Cardiac septum (tissue), 1 donor: ENCODE measurements at regions of chr2 and their contacts with region 1.

Region 1: DNA sequence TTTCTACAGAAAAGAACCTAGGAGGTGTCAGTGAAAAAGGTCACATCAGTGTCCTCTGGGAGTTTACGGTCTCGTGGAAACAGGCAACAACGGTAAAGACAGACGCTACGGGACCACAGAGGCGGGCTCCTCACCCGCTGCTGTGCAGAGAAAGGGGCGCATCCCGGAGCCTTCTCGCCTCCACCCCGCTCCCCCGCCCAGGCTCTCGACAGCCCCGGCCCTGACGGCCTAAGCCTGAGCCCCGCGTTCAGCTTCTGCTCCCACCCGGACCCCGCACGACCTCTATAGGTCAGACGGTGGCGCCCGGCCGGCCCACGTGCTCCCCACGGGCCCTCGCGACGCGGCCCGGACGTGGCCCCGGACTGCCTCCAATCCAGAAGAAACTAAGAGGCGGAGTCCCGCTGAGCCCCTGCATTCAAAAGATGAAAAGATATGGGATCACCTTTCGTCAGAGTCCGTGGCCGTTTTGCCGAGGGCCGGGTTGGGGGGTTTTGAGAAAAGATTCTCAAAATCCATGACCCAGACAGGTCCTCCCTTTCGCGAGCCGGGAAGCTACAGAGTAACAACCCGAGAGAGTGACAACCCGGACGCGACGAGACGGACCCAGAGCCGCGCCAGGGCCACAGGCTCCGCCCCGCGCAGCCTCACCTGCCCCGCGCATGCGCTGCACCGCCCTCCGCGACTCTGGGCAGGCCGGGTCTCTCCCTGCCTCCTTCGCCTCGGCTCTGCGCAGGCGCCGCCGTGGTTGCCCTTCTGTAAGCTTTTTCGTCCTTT is at the start of gene ZC3H8:
- DNase-seq: peak; percentile 98
- total RNA-seq, gene ZC3H8: 9.6 TPM

Region 2: GRCh38 chr2:111897924-111898702 is 356.5 kb before region 1 on chr2 and contains the start of gene MERTK:
- intact Hi-C with region 1: loop called (anchors 5 kb)
- DNase-seq: peak; percentile 94
- total RNA-seq, gene MERTK: 5.8 TPM

Region 3: DNA sequence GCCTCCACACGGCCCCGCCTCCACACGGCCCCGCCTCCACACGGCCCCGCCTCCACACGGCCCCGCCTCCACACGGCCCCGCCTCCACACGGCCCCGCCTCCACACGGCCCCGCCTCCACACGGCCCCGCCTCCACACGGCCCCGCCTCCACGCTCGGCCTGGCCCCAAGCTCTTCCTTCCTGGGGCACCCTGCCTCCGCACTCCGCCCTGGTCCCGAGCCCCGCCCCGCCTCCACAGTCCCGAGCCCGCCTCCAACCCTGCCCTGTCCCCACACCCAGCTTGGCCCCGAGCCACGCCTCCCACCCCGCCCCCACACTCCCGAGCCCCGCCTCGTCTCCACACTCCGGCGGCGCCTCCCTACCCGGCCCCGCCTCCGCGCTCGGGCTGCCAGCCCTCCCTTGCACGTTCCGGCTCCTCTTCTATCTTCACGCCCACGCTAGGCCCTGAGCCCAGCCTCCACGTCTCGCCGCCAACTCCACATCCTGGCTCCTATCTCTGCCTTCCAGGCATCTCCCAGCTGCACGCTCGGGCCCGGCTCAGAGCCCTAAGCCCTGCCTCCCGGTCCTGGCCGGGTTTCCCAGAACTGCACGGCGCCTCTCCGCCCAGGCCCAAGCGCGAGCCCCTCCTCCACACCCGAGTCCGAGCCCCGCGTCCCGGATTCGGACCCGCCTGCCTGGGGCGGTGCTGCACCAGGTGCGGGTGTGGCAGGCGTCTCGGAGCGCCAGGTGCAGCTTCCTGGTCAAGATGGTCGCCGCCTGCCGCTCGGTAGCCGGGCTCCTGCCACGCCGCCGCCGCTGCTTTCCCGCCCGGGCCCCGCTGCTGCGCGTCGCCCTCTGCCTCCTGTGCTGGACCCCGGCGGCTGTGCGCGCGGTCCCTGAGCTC is 199.6 kb before region 1 on chr2 and contains the start of gene TMEM87B:
- intact Hi-C with region 1: loop called (anchors 5 kb)
- DNase-seq: peak; percentile 99
- total RNA-seq, gene TMEM87B: 11.0 TPM

Region 4: DNA sequence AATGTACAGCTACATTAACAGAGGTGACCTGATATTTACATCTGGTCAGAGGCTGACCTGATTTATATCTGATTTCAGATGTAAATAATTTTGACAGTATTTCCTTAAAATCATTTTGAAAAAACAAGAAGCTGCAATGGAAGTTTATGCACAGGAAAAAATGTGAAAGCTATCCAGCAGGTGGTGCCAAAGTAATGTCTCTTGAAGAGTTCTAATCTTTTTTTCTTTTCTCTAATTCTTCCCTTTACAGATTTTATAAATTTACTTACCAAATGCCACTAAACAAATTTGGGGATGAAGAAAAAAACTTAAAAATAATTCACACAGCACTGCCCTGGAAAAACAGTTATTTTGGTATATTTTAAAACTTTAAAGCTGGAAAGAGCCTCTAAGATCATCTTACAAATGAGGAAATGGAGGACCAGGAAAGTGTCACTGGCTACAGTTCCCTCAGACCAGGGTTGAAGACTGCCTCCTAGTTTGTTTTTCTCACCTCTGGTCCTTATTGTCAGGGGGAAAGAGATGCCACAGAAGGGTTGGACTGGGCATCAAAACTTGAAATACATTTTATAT is 132.9 kb before region 1 on chr2:
- intact Hi-C with region 1: loop called (anchors 5 kb)
- DNase-seq: no peak

Region 5: DNA sequence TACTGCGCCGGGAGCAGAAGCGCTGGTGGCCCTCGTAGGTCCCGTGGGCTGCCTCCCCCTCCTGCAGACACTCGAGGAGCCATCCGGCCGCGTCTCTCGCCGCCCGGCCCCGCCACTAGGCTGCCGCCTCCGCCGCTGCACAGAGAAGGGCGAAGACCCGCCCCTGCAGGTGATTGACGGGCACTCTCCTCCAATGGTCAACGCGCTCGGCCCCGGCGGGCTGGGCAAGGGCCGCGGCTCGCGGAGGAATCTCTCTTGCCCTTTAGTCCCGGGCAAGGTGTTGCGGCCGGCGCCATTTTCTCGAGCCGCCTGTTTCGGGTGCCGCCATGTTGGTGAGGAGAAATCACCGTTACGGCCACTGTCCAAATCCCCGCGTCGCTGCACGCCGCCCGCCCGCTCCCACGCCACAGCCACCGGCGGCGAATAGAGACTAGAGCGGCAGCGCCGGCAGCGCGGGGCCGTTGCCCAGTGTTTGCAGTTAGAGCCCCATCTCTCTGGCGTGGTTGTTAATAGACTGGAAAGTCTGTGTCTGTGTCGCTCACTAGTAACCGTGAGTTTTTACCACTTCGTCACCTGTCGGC is 20.7 kb after region 1 on chr2 and contains the start of gene ZC3H6:
- intact Hi-C with region 1: loop called (anchors 2 kb)
- DNase-seq: peak; percentile 100
- total RNA-seq, gene ZC3H6: 19.1 TPM

Region 6: DNA sequence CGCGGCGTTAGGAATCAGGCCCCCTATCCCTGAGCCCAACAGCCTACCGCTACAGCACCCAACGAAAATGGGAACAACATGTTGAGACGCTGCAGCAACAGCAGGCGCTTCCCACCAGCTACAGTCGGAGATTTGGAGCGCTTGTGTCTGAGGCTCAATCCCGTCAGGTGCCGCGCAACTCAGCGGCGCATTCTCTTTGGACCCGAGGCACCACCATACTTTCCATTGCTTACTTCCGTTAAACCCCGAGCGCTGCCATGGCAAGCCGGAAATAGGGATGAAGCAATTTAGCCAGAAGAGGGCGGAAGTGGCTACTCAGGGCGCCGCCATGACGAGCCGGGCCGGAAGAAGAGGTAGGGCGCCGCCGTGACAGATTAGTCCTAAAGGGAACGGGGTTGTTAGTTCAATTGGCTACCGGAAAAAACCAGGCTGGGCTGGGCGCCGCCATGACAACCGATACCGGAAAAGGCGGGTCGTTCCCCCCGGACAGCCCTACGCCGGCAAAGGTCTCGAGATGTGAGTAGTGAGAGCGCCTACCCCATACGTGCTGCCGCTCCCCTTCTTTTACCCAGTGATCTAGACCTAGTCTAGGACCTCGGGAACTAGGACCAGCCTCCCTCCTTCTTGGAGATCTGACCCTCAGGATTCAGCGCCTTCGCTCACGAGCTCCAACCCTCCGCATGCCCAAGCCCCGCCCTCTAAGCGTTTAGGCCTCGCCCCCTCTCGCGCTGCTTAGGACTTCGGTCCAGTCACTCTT is 329.7 kb after region 1 on chr2 and contains the start of gene CHCHD5:
- intact Hi-C with region 1: loop called (anchors 5 kb)
- DNase-seq: peak; percentile 97
- total RNA-seq, gene CHCHD5: 24.9 TPM

Region 7: GRCh38 chr2:113032737-113033136 is 778.1 kb after region 1 on chr2:
- intact Hi-C with region 1: no loop called
- DNase-seq: no peak